HEK293 (cell line): ENCODE measurements at regions of chr6 and their contacts with region 1.

Region 1: DNA sequence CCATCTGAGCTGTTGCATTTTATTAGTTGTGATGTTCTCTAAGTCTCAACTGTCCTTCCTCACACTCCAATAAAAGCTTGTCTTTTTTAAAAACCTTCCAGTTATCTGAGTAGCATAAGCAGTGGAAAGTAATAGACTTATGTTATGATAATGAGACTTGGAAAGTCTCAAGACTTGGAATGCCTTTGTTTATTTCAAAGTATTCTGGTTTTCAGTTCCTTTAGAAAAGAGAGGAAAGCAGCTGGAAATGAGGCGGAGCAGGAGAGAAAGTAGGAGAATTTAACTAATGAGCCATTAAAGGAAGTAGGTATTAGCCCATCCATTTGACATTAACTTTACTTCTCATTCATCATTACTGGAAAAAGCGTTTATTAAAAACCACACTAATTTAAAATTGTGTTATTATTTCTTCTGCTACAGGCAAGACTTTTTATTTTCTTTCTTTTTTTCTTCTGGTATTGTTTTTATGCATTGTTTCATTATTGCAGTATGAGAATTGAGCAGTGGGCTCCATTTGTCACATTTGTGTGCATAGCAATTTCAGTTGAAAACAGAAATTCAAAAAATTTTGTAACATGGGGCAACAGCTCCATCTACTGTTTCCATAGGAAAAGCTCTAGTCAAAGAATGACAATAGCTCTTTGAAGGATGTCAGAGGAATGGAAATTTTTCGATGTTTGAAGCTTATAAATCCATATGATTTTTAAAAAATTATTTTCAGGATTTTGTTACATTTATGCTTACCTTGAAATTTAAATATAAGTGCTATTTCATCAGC is 194.8 kb downstream of the COL9A1 start:
- H3K4me3 ChIP-seq: no peak overlapping the region
- H3K27ac ChIP-seq: no peak overlapping the region
- H3K4me1 ChIP-seq: no peaks in the 10 kb centered on the region
- CTCF ChIP-seq: no peak

Region 2: DNA sequence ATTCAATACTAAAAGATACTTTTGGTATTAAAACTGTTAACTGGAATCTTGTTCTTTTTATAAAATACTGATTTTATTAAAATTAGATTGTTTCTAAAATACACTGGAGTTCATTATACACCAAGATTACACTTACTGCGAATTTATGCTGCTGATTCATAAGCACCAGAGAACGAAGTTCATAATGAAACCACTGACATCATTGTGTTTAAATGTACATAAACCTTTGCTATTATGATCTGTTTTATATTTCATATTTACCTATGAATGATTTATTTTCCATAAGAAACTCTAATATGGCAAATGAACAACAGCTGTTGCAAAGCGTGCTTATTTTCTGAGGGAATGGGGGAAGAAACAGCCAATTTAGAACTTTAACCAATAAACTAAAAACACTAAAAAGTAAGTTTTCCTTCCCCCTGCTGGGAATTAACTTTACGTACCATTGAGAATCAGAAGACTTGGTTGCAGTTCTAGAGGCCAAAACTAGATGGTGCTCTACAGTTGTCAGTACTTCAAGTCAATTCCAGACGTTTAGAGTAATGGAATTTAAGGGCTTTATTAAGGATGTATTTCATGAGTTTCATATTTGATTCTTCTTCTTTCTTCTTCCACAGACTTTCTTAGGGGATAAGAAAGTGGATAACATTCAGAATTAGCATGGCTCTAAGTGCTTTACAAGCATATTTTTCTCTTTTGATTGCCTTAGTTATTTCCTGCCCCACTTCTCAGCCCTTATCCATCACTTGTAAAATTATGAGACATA is 272.4 kb before region 1 on chr6:
- CTCF ChIA-PET with region 1: interaction called, 31 read pairs
- POLR2A ChIA-PET with region 1: no interaction called
- H3K4me3 ChIP-seq: no peak overlapping the region
- H3K27ac ChIP-seq: no peak overlapping the region
- H3K4me1 ChIP-seq: no peaks in the 10 kb centered on the region
- CTCF ChIP-seq: peak; percentile 46; the same call in 1 of the 2 replicates

Region 3: GRCh38 chr6:70094156-70094555 is 13.9 kb before region 1 on chr6:
- CTCF ChIA-PET with region 1: interaction called, 13 read pairs
- POLR2A ChIA-PET with region 1: no interaction called
- H3K4me3 ChIP-seq: no peak overlapping the region
- H3K27ac ChIP-seq: no peak overlapping the region
- H3K4me1 ChIP-seq: no peaks in the 10 kb centered on the region
- CTCF ChIP-seq: no peak

Region 4: GRCh38 chr6:70124882-70125545 is 17.0 kb after region 1 on chr6:
- CTCF ChIA-PET with region 1: interaction called, 13 read pairs
- POLR2A ChIA-PET with region 1: no interaction called
- H3K4me3 ChIP-seq: no peak overlapping the region
- H3K27ac ChIP-seq: no peak overlapping the region
- H3K4me1 ChIP-seq: no peaks in the 10 kb centered on the region
- CTCF ChIP-seq: no peak

Region 5: GRCh38 chr6:70166088-70166958 is 58.3 kb after region 1 on chr6:
- CTCF ChIA-PET with region 1: interaction called, 65 read pairs
- POLR2A ChIA-PET with region 1: no interaction called
- H3K4me3 ChIP-seq: peak overlapping the region; percentile 25
- H3K27ac ChIP-seq: no peak overlapping the region
- H3K4me1 ChIP-seq: no peaks in the 10 kb centered on the region
- CTCF ChIP-seq: peak; percentile 75; the same call in 1 of the 2 replicates

Region 6: DNA sequence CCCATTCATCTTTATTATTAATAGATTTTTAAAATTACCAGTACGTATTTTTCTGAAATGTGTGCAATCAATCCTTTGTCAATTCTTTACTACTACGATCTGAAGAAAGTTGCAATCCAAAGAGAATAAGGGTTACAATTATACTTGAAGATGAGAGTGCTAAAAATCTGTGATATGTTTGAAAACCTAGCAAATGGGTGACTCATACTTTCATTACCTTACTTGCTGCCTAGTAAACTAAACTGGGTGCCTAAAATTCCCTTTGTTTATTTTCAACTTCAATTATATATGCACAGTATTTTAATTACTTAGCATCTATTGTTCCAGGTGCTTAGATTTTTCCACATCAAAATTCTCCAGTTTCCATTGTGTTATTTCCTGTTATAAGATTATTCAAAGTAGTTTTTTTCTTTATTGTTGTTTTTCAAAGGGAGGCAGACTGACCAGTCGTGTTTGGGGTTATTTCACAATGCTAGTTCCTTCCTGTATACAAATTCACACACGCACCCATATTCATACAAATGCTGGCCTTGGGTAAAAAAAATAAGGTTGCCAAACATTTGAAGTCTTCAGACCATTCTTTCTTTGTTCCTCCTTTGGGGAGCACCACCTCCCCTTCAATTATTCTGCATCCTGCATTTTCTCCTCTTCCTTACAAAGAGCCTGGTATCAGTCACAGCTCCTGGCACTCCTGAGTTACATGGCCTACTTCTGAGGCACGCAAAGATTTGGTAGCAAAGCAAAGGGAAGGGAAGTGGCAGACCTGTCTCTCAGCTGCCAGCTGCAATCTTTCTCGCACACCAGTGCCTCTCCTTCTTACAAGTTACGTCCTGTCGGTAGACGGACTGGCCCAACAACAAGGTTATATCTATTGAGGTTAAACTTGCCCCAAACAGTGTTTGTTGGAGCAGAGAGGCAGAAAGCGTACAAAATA is 289.0 kb after region 1 on chr6:
- CTCF ChIA-PET with region 1: no interaction called
- POLR2A ChIA-PET with region 1: no interaction called
- H3K4me3 ChIP-seq: no peak overlapping the region
- H3K27ac ChIP-seq: no peak overlapping the region
- H3K4me1 ChIP-seq: no peaks in the 10 kb centered on the region; the same call in 1 of the 2 replicates
- CTCF ChIP-seq: no peak